Adrenal gland (tissue), 19 donors: ENCODE measurements at regions of chr16 and their contacts with region 1.

Region 1: DNA sequence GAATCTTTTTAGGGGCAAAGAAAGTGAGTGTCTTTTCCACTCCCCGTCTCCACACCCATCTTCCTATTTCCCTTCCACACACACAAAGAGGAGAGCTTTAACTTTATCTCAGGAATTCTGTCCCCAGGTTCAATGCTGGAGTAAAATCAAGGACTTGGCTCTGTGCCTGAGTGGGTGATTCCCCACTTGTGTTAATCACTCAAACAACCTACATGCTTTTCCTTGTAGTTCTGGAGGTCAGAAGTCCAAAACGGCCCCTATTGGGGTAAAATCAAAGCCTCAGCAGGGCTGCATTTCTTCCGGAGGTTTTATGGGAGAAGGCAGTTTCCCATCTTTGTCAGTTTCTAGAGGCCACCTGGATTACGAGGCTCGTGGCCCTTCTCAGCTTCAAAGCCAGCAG is 422.3 kb upstream of the RBFOX1 start:
- DNase-seq: no peak
- H3K4me3 ChIP-seq: no peak overlapping the region
- H3K27ac ChIP-seq: no peak overlapping the region
- H3K4me1 ChIP-seq: no peaks in the 10 kb centered on the region
- H3K27me3 ChIP-seq: no peaks in the 10 kb centered on the region
- CTCF ChIP-seq: no peak
- POLR2A ChIP-seq: no peak

Region 2: DNA sequence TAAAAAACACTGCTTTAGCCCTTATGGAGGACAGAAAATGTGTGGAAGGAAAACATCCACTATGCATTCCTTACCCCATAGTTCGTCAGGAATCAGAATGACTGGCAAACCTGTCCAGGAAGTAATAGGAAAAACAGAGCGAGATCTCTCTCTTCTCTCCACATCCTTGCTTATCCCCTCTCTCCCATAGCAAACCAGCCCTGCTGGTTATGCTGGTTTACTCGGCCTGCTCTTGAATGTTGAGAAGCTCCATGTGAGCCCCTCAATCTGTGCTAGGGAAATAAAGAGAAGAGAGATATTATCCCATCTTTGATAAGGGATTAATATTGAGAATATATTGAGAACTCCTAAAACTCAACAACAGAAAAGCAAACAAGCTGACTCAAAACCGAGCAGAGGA is 19.6 kb after region 1 on chr16:
- intact Hi-C with region 1: loop called in 1 of 2 experiments (anchors 2 kb)
- DNase-seq: no peak
- H3K4me3 ChIP-seq: no peak overlapping the region
- H3K27ac ChIP-seq: no peak overlapping the region
- H3K4me1 ChIP-seq: no peaks in the 10 kb centered on the region
- H3K27me3 ChIP-seq: no peaks in the 10 kb centered on the region
- CTCF ChIP-seq: no peak
- POLR2A ChIP-seq: no peak